Naive thymus-derived CD4-positive, alpha-beta T cell (primary cell): ENCODE measurements at regions of chr1 and their contacts with region 1.

Region 1: GRCh38 chr1:70410604-70411359 is at the start of gene CTH:
- DNase-seq: peak; percentile 81 to 94 (median 92)
- ATAC-seq: peak; percentile 96
- H3K4me3 ChIP-seq: peak within 1 kb of the TSS; percentile 85
- H3K4me3 Mint-ChIP-seq: peak within 1 kb of the TSS; percentile 90 to 100 (median 98)
- H3K27ac ChIP-seq: peak within 1 kb of the TSS; percentile 85
- H3K27ac Mint-ChIP-seq: peak within 1 kb of the TSS; percentile 82 to 99 (median 96)
- H3K4me1 ChIP-seq: peaks cover 4 to 9% of the 10 kb centered on the region in 2 donors
- H3K4me1 Mint-ChIP-seq: peaks cover 5 to 26% (median 24%) of the 10 kb centered on the region in 7 donors
- H3K27me3 ChIP-seq: no peaks in the 10 kb centered on the region
- H3K27me3 Mint-ChIP-seq: peaks cover 0 to 10% (median 0%) of the 10 kb centered on the region in 5 donors
- total RNA-seq, gene CTH: 2.6 to 7.1 (median 5.1) TPM

Region 2: DNA sequence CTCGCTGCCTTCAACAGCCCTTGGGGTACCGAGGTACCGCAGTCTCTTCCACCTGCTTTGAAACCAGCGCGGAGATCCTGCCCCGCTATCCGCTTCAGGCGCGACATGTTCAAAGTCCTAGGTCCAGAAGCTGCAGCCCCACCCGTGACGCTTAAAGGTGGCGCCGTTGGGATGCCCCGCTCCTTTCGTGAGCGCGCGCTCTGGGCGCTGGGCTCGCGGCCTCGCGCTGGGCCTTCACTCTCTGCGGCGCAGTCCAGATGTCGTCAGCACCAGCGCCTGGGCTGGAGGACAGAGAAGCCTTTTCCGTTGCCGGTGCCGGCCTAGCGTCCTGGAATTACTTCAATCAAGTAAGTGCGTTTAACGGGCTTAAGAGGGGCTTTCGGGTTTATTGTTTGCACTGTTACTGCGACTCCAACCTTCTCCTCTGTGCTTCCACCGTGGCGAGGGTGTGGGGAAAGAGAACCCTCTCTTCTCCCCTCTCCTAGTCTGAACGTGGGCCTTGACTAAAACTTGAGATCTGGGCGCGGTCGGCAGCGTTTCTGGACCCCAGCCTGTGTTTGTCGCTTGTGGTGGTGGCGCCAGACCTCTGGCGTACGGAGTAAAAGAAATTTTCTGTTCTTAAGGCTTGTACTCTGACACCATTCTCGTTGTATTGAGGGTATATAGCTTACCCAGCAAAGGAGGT is 205.2 kb before region 1 on chr1 and contains the start of gene LRRC40:
- CTCF ChIA-PET with region 1: no interaction called
- POLR2A ChIA-PET with region 1: no interaction called
- intact Hi-C with region 1: loop called (anchors 1 kb)
- DNase-seq: peak; percentile 92 to 98 (median 95)
- ATAC-seq: peak; percentile 99
- H3K4me3 ChIP-seq: peak within 1 kb of the TSS; percentile 85
- H3K4me3 Mint-ChIP-seq: peak within 1 kb of the TSS; percentile 87 to 99 (median 98)
- H3K27ac ChIP-seq: peak within 1 kb of the TSS; percentile 96
- H3K27ac Mint-ChIP-seq: peak within 1 kb of the TSS; percentile 95 to 100 (median 99)
- H3K4me1 ChIP-seq: peaks cover 21 to 22% of the 10 kb centered on the region in 2 donors
- H3K4me1 Mint-ChIP-seq: peaks cover 44 to 92% (median 78%) of the 10 kb centered on the region in 7 donors
- H3K27me3 ChIP-seq: no peaks in the 10 kb centered on the region
- H3K27me3 Mint-ChIP-seq: no peaks in the 10 kb centered on the region
- total RNA-seq, gene LRRC40: 10.3 to 19.2 (median 12.1) TPM

Region 3: DNA sequence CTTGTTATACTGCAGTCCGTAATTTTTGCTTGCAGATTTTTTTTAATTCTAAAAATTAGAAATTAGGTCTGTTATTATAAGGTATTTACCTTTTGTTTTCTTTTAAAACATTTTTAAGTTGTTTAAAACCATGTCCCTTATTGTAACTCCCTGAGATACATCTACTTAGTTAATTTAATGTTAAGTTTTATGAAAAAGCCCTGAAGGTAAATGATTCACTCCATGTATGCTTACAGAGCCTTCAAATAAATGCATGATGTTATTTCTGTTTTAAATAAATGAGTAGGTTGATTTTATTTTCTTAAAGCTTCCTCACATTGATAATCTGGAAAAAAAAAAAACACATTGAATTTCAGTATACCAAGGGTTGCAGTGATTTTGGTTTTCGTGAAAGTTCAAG is 182.1 kb before region 1 on chr1:
- CTCF ChIA-PET with region 1: no interaction called
- POLR2A ChIA-PET with region 1: no interaction called
- intact Hi-C with region 1: no loop called
- DNase-seq: no peak
- ATAC-seq: no peak
- H3K4me3 ChIP-seq: no peak overlapping the region
- H3K4me3 Mint-ChIP-seq: peak overlapping the region in 1 of 10 donors; percentile 22
- H3K27ac ChIP-seq: no peak overlapping the region
- H3K27ac Mint-ChIP-seq: peak overlapping the region in 1 of 9 donors; percentile 2
- H3K4me1 ChIP-seq: peaks cover 13 to 25% of the 10 kb centered on the region in 2 donors
- H3K4me1 Mint-ChIP-seq: peaks cover 28 to 63% (median 44%) of the 10 kb centered on the region in 7 donors
- H3K27me3 ChIP-seq: no peaks in the 10 kb centered on the region
- H3K27me3 Mint-ChIP-seq: no peaks in the 10 kb centered on the region

Region 4: DNA sequence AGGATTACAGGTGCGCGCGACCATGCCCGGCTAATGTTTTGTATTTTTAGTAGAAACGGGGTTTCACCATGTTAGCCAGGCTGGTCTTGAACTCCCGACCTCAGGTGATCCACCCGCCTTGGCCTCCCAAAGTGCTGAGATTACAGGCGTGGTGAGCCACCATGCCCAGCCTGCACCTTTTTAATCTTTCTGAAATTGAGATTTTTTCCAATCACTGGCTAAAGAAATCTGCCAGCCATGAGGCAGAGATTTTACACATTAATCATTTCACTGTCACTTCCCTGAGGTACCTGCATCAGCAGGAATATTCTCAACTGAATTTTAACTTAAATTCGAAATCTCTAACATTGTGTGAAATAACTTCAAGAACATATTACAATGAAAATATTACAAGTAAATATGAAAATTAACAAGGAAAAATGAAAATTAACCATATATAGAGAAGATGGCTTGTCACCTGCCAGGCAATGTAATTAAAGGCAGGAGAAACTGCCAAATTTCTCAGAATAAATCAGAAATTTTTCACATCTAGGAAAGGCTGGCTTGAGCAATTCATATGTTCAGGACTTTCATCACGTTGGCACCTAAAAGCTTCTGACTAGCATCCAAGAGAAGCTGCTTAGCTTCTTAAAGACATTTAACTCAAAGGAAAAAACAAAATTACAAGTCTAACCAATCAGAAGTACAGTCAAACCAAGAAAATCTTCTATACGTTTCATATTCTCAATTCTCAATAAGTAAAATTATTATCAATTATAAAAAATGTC is 62.2 kb before region 1 on chr1:
- CTCF ChIA-PET with region 1: interaction called, 10 read pairs
- POLR2A ChIA-PET with region 1: interaction called, 81 read pairs
- intact Hi-C with region 1: no loop called
- DNase-seq: no peak
- ATAC-seq: no peak
- H3K4me3 ChIP-seq: no peak overlapping the region
- H3K4me3 Mint-ChIP-seq: peak overlapping the region in 5 of 10 donors; percentile 7 to 38 (median 29)
- H3K27ac ChIP-seq: no peak overlapping the region
- H3K27ac Mint-ChIP-seq: no peak overlapping the region
- H3K4me1 ChIP-seq: peaks cover 11 to 24% of the 10 kb centered on the region in 2 donors
- H3K4me1 Mint-ChIP-seq: peaks cover 34 to 83% (median 72%) of the 10 kb centered on the region in 7 donors
- H3K27me3 ChIP-seq: no peaks in the 10 kb centered on the region
- H3K27me3 Mint-ChIP-seq: no peaks in the 10 kb centered on the region

Region 5: DNA sequence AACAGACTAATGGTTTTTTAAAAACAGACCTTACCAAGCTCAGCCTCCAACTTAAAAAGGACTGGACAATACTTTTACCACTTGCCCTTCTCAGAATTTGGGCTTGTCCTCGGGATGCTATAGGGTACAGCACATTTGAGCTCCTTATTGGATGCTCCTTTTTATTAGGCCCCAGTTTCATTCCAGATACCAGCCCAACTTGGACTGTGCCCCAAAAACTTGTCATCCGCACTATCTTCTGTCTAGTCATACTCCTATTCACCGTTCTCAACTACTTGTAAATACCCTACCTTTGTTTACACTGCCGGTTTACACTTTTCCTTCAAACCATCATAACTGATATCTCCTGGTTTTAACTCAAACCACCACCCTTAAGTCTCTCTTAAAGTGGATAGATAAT is 38.4 kb before region 1 on chr1:
- CTCF ChIA-PET with region 1: no interaction called
- POLR2A ChIA-PET with region 1: no interaction called
- intact Hi-C with region 1: no loop called
- DNase-seq: no peak
- ATAC-seq: no peak
- H3K4me3 ChIP-seq: no peak overlapping the region
- H3K4me3 Mint-ChIP-seq: no peak overlapping the region
- H3K27ac ChIP-seq: no peak overlapping the region
- H3K27ac Mint-ChIP-seq: no peak overlapping the region
- H3K4me1 ChIP-seq: no peaks in the 10 kb centered on the region
- H3K4me1 Mint-ChIP-seq: peaks cover 0 to 4% (median 0%) of the 10 kb centered on the region in 7 donors
- H3K27me3 ChIP-seq: no peaks in the 10 kb centered on the region
- H3K27me3 Mint-ChIP-seq: no peaks in the 10 kb centered on the region

Region 6: DNA sequence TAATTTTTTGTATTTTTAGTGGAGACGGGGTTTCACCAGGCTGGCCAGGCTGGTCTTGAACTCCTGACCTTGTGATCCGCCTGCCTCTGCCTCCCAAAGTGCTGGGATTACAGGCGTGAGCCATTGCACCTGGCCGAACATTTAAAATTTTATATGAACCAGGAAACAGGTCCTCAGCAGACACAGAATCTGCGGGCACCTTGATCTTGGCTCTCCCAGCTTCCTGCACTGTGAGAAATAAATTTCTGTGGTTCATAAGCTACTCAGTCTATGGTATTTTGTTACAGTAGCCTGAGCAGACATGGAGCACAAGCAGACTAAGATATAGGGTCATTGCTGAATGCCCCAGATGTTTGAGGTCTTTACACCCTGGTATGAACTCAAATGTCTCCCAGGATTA is 23.3 kb before region 1 on chr1:
- CTCF ChIA-PET with region 1: no interaction called
- POLR2A ChIA-PET with region 1: interaction called, 10 read pairs
- intact Hi-C with region 1: no loop called
- DNase-seq: no peak
- ATAC-seq: no peak
- H3K4me3 ChIP-seq: no peak overlapping the region
- H3K4me3 Mint-ChIP-seq: no peak overlapping the region
- H3K27ac ChIP-seq: no peak overlapping the region
- H3K27ac Mint-ChIP-seq: no peak overlapping the region
- H3K4me1 ChIP-seq: no peaks in the 10 kb centered on the region
- H3K4me1 Mint-ChIP-seq: no peaks in the 10 kb centered on the region
- H3K27me3 ChIP-seq: no peaks in the 10 kb centered on the region
- H3K27me3 Mint-ChIP-seq: peaks cover 0 to 22% (median 13%) of the 10 kb centered on the region in 5 donors

Region 7: DNA sequence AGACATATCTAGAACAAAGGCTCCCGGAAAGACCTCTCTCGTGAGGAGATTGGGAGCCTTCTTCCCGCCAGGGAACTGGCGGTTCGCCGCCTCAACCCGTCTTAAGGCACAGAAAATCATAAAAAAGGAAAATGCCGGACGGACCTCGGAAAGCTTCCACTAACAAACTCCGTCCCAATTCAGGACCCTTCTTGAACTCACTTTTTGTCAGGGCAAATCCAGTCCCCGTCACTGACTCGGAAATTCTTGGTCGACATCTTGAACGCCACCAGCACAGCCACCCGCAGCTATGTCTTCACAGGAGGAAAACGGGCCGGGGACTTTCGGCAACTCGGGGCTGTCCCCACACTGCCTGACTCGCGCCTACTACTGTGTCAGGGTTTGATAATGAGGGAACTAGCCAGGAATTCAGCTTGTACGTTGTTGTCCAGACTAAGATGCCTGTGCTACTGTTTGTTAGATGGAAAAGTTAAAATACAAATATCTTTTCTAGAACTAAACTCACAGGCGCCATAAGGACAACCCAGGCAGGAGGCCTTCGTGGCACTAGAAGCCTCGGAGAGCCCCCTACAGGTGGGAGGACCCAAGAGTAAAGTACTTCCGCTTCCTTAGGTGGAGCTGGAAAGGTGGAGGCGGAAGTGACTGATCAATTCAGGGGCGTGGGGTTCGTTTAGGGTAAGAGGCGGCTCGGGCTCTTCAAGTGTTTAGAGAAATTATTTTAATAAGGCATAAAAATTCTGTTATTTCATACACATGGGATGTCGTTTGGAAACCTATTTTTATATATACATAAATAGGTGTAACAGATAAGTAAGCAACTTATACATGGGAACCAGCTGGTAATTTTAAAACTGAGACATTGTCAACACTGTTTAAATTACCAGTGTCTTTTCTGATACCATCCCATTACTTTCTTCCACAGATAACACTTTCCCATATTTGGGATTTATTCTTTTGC is 670.2 kb after region 1 on chr1 and contains the start of gene ZRANB2:
- CTCF ChIA-PET with region 1: interaction called, 3 read pairs
- POLR2A ChIA-PET with region 1: interaction called, 10 read pairs
- intact Hi-C with region 1: loop called (anchors 1 kb)
- DNase-seq: peak; percentile 74 to 96 (median 94)
- ATAC-seq: peak; percentile 98
- H3K4me3 ChIP-seq: peak within 1 kb of the TSS; percentile 87
- H3K4me3 Mint-ChIP-seq: peak within 1 kb of the TSS; percentile 93 to 100 (median 99)
- H3K27ac ChIP-seq: peak within 1 kb of the TSS; percentile 95
- H3K27ac Mint-ChIP-seq: peak within 1 kb of the TSS; percentile 98 to 100 (median 99)
- H3K4me1 ChIP-seq: peaks cover 15 to 19% of the 10 kb centered on the region in 2 donors
- H3K4me1 Mint-ChIP-seq: peaks cover 7 to 55% (median 39%) of the 10 kb centered on the region in 7 donors
- H3K27me3 ChIP-seq: no peaks in the 10 kb centered on the region
- H3K27me3 Mint-ChIP-seq: peaks cover 12 to 28% (median 17%) of the 10 kb centered on the region in 5 donors
- total RNA-seq, gene ZRANB2: 84.9 to 167 (median 121) TPM